SK-N-SH (cell line): ENCODE measurements at regions of chr17 and their contacts with region 1.

Region 1: GRCh38 chr17:38702166-38702899 is 2.7 kb upstream of the MLLT6 start:
- DNase-seq: peak; percentile 94
- H3K4me3 ChIP-seq: peak overlapping the region; percentile 71 to 81
- H3K27ac ChIP-seq: peak overlapping the region; percentile 71 to 86
- H3K4me1 ChIP-seq: peaks cover 10 to 36% of the 10 kb centered on the region in 2 experiments; a peak in 2 of 4 replicates
- H3K27me3 ChIP-seq: no peaks in the 10 kb centered on the region
- CTCF ChIP-seq: no peak
- EP300 ChIP-seq: peak in 1 of 2 experiments; percentile 26; a peak in 1 of 4 replicates
- RAD21 ChIP-seq: no peak

Region 2: GRCh38 chr17:38717139-38717745 is 14.9 kb after region 1 on chr17:
- CTCF ChIA-PET with region 1: no interaction called
- POLR2A ChIA-PET with region 1: interaction called, 11 read pairs
- DNase-seq: no peak
- H3K4me3 ChIP-seq: no peak overlapping the region
- H3K27ac ChIP-seq: no peak overlapping the region
- H3K4me1 ChIP-seq: peaks cover 0 to 4% of the 10 kb centered on the region in 2 experiments; a peak in 1 of 4 replicates
- H3K27me3 ChIP-seq: no peaks in the 10 kb centered on the region
- CTCF ChIP-seq: no peak
- EP300 ChIP-seq: no peak
- RAD21 ChIP-seq: no peak

Region 3: GRCh38 chr17:38724337-38724988 is 22.1 kb after region 1 on chr17:
- CTCF ChIA-PET with region 1: interaction called, 4 read pairs
- POLR2A ChIA-PET with region 1: interaction called, 14 read pairs
- DNase-seq: peak; percentile 94
- H3K4me3 ChIP-seq: no peak overlapping the region; a peak in 1 of 4 replicates
- H3K27ac ChIP-seq: peak overlapping the region; percentile 32 to 95; a peak in 3 of 4 replicates
- H3K4me1 ChIP-seq: peaks cover 7 to 41% of the 10 kb centered on the region in 2 experiments; a peak in 1 of 4 replicates
- H3K27me3 ChIP-seq: no peaks in the 10 kb centered on the region
- CTCF ChIP-seq: no peak
- EP300 ChIP-seq: peak in 1 of 2 experiments; percentile 58; a peak in 1 of 4 replicates
- RAD21 ChIP-seq: 0 out of 2 replicates have a peak, but pooled peaks have one; percentile 3